ENCODE measurements at regions of chr11 and their contacts with region 1.

Region 1: GRCh38 chr11:33329705-33330329 is 72.6 kb downstream of the HIPK3 start:
- DNase-seq: peak; percentile 72
- H3K4me3 ChIP-seq: no peak overlapping the region
- H3K27ac ChIP-seq: no peak overlapping the region
- H3K4me1 ChIP-seq: no peaks in the 10 kb centered on the region
- CTCF ChIP-seq: peak; percentile 95

Region 2: DNA sequence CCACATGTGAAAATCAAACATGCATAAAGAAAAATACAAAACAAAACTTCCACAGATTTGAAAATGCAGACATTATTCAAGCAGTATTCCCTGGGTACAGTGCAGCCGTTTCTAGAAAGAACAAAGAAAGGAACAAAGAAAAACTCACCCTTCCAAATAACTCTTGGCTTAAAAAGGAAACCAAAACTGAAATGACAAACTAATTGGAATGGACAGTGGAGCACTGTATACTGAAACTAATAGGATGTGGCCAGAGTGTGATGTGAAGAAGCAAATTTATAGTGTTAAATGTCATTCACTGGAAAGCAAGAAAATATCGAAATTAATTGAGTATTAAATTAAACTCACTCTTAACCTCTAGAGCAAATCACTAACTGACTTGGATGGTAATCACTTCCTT is 381.8 kb before region 1 on chr11:
- CTCF ChIA-PET with region 1: no interaction called
- POLR2A ChIA-PET with region 1: no interaction called
- intact Hi-C with region 1: no loop called
- DNase-seq: no peak
- H3K4me3 ChIP-seq: no peak overlapping the region
- H3K27ac ChIP-seq: no peak overlapping the region
- H3K4me1 ChIP-seq: no peaks in the 10 kb centered on the region
- CTCF ChIP-seq: no peak

Region 3: DNA sequence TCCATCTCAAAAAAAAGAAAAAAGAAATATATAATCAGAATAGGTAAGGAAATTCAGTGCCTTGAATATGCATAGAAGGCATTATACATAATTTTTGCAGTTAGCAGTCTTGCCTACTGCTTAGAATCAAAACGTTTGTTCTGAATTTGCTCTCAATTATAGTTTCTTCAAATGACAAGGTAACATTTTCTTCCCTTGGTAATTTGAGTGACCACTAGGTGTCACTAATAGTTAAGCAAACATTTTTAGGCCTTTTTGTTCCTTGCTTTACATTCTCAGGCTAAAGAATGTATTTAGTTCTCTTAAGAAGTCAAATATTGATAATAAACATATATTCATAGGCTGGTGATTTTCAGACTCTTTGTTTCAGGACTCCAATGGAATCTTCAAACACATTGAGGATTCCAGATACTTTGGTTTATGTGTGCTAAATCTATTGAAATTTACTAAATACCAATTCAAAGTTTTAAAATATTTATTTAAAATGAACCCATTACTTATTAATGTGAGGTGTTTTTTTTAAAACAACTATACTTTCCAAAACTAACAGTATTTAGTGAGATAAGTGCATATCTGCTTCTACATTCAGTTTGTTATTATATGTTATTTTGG is 369.2 kb before region 1 on chr11:
- CTCF ChIA-PET with region 1: no interaction called
- POLR2A ChIA-PET with region 1: no interaction called
- intact Hi-C with region 1: loop called (anchors 10 kb)
- DNase-seq: peak; percentile 60
- H3K4me3 ChIP-seq: no peak overlapping the region
- H3K27ac ChIP-seq: no peak overlapping the region
- H3K4me1 ChIP-seq: no peaks in the 10 kb centered on the region
- CTCF ChIP-seq: peak; percentile 91

Region 4: GRCh38 chr11:33089776-33090175 is 240.0 kb before region 1 on chr11:
- CTCF ChIA-PET with region 1: no interaction called
- POLR2A ChIA-PET with region 1: no interaction called
- intact Hi-C with region 1: loop called (anchors 10 kb)
- DNase-seq: no peak
- H3K4me3 ChIP-seq: no peak overlapping the region
- H3K27ac ChIP-seq: no peak overlapping the region
- H3K4me1 ChIP-seq: no peaks in the 10 kb centered on the region
- CTCF ChIP-seq: no peak

Region 5: GRCh38 chr11:33257897-33258630 is 71.8 kb before region 1 on chr11:
- CTCF ChIA-PET with region 1: no interaction called
- POLR2A ChIA-PET with region 1: no interaction called
- intact Hi-C with region 1: loop called (anchors 5 kb)
- DNase-seq: peak; percentile 84
- H3K4me3 ChIP-seq: peak overlapping the region; percentile 83
- H3K27ac ChIP-seq: peak overlapping the region; percentile 85
- H3K4me1 ChIP-seq: peaks cover 27% of the 10 kb centered on the region
- CTCF ChIP-seq: peak; percentile 43